Activated CD4-positive, alpha-beta memory T cell treated with anti-CD3 and anti-CD28 coated beads, Interleukin-2, amount 10 ng/mL, durations not matched to agents 7 days and 5 days (primary cell): ENCODE measurements at regions of chr1 and their contacts with region 1.

Region 1: DNA sequence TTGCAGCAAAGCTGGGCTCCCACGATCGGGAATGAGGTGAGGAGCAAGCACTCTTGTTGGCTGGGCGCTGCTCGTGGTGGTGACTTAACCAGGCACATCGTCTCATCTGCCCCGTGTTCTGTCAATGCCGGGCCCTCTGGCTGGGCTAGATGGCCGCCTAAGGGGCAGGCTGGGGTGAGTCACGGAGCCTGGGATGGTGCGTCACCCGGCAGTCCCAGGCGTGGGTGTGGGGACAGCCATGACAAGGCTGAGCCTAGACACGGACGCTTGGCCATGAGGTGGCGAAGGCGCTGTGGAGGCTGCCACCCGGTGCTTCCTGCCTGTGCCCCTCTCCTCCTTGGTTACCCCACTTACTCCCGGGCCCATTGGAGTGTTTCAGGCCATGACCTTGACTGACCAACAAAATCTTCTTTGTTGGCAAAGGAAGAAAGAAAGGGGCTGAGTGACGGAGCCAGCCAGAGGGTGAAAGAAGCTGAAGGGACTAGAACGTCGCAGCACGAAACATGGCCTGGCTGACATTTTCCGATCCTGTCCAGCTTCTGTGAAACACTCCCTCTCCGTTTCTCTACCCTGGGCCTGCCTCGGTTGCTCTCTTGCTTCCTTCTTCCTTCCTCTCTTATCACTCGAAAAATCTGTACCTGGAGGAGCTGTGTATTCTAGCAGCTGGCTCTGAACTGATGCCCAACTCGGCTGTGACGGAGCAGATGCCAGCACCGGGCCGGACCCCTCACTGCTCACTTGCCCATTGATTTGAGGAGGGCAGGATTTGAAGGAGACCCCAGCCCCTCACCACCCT is 596 bp downstream of the CD247 start:
- DNase-seq: peak; percentile 88
- H3K4me3 Mint-ChIP-seq: peak overlapping the region; percentile 99
- H3K27ac Mint-ChIP-seq: peak overlapping the region; percentile 99
- H3K4me1 Mint-ChIP-seq: peaks cover 45% of the 10 kb centered on the region
- H3K27me3 Mint-ChIP-seq: peaks cover 11% of the 10 kb centered on the region

Region 2: DNA sequence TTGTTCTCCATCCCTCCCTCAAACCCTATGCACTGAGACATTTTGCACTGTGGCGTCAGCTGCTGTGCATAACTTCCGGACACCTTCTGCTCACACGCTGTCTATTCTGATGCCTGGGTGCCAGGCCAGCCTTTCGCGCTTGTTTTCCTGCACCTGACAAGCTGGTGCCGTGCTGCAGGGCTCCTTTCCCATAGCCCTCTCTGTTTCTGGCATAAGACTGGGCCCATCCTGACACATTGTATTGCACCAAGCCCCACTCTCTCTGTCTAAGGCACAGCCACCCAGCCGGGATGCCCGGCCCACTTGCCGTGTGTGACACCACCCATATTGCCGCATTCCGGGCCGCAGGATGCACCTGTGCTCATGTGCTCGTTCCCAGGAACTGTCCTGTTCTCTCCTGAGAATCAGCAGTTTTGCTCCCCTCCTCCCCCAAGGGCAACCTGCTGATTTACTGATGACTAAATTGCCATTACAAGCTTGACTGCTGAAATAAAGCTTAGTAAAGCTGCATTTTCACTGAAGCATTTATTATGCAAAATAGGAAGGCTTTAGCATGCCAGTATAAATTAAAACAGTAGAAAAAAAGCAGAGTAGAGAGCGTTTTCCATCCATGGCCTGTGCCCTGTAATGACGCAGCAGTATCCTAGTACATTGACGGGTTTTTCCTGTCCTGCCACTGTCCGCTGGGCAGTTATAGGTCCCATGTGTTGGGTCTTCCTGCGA is 87.4 kb before region 1 on chr1:
- CTCF ChIA-PET with region 1: no interaction called
- POLR2A ChIA-PET with region 1: no interaction called
- DNase-seq: no peak
- H3K4me3 Mint-ChIP-seq: no peak overlapping the region
- H3K27ac Mint-ChIP-seq: peak overlapping the region; percentile 28
- H3K4me1 Mint-ChIP-seq: peaks cover 35% of the 10 kb centered on the region
- H3K27me3 Mint-ChIP-seq: no peaks in the 10 kb centered on the region

Region 3: GRCh38 chr1:167442124-167442848 is 75.4 kb before region 1 on chr1:
- CTCF ChIA-PET with region 1: interaction called, 37 read pairs
- POLR2A ChIA-PET with region 1: interaction called, 64 read pairs
- DNase-seq: peak; percentile 90
- H3K4me3 Mint-ChIP-seq: no peak overlapping the region
- H3K27ac Mint-ChIP-seq: peak overlapping the region; percentile 44
- H3K4me1 Mint-ChIP-seq: peaks cover 86% of the 10 kb centered on the region
- H3K27me3 Mint-ChIP-seq: no peaks in the 10 kb centered on the region

Region 4: DNA sequence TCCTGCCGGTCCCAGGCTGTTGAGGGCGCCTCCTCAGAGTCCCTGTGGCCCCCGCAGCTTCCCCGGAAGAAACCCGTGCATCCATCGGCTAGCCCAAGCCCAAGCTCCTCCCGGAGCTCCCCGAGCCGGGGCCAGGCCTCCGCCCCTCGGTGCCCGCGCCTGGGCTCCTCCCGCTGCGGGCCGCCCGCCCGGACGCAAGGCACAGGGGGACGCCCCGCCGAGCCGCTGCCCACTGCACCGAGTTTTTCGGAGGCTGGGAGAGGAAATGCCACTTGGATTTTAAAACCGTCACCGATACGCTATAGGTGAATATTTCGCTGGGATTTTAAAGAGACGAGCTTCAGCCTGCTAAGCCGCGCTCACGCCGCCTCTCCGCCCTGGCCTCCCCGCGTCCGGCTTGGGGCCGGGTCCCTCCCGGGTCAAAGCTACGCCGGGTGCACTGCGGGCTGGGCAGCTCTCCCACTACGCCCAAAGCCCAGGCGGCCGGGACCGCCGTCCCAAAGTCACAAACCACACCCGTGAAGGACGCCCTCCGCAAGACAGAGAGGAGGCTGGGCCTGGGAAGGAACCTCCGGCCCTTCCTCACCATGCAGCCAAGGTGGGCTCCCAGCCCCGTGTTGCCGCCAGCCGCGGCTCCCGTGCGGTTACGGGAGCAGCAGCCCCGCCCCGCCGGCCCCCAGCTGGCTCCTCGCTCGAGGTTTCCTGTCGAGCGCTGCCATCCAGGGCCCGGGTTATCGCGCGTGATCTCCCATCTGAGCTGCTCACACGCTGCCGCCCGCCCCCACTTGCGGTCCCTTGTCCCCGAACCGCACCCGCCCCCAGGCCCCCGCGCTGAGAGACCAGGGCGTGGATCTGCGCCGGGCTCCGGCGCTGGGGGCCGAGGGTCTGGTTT is 62.6 kb before region 1 on chr1:
- CTCF ChIA-PET with region 1: interaction called, 13 read pairs
- POLR2A ChIA-PET with region 1: interaction called, 143 read pairs
- DNase-seq: peak; percentile 85
- H3K4me3 Mint-ChIP-seq: peak overlapping the region; percentile 75
- H3K27ac Mint-ChIP-seq: peak overlapping the region; percentile 75
- H3K4me1 Mint-ChIP-seq: peaks cover 66% of the 10 kb centered on the region
- H3K27me3 Mint-ChIP-seq: no peaks in the 10 kb centered on the region

Region 5: GRCh38 chr1:167489571-167490340 is 28.0 kb before region 1 on chr1:
- CTCF ChIA-PET with region 1: interaction called, 5 read pairs
- POLR2A ChIA-PET with region 1: interaction called, 25 read pairs
- DNase-seq: no peak
- H3K4me3 Mint-ChIP-seq: peak overlapping the region; percentile 36
- H3K27ac Mint-ChIP-seq: peak overlapping the region; percentile 71
- H3K4me1 Mint-ChIP-seq: peaks cover 94% of the 10 kb centered on the region
- H3K27me3 Mint-ChIP-seq: no peaks in the 10 kb centered on the region

Region 6: DNA sequence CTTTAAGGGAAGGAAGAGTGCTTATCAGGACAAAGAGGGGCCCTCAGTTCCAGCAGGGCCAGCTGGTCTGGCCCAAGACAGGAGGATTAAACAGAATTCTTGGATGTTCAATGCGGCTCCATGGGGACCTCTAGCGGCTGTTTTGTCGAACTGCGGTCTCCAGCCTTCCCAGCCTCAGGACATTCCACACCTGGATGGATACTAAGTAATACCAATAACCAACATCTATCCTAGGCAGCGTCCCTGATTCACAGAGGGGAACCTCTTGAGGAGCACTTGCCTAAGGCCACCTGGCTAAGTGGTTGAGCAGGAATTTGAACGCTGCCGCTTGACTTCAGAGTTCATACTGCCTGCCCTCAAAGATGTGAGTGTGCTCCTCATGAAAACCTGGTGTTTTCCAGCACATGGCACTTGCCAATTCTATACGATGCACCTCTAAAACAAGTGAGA is 16.1 kb after region 1 on chr1:
- CTCF ChIA-PET with region 1: interaction called, 84 read pairs
- POLR2A ChIA-PET with region 1: interaction called, 26 read pairs
- DNase-seq: peak; percentile 68
- H3K4me3 Mint-ChIP-seq: no peak overlapping the region
- H3K27ac Mint-ChIP-seq: no peak overlapping the region
- H3K4me1 Mint-ChIP-seq: peaks cover 7% of the 10 kb centered on the region
- H3K27me3 Mint-ChIP-seq: no peaks in the 10 kb centered on the region